ENCODE measurements at regions of chr18 and their contacts with region 1.

Region 1: GRCh38 chr18:46574000-46574742 is 82.8 kb downstream of the LOXHD1 start:
- DNase-seq: no peak
- ATAC-seq: no peak
- H3K4me3 ChIP-seq: no peak overlapping the region
- H3K4me3 Mint-ChIP-seq: no peak overlapping the region
- H3K27ac ChIP-seq: no peak overlapping the region
- H3K27ac Mint-ChIP-seq: no peak overlapping the region
- H3K4me1 ChIP-seq: no peaks in the 10 kb centered on the region
- H3K4me1 Mint-ChIP-seq: no peaks in the 10 kb centered on the region
- H3K27me3 ChIP-seq: peaks cover 0 to 23% of the 10 kb centered on the region in 2 experiments
- H3K27me3 Mint-ChIP-seq: peaks cover 4% of the 10 kb centered on the region in 2 donors

Region 2: DNA sequence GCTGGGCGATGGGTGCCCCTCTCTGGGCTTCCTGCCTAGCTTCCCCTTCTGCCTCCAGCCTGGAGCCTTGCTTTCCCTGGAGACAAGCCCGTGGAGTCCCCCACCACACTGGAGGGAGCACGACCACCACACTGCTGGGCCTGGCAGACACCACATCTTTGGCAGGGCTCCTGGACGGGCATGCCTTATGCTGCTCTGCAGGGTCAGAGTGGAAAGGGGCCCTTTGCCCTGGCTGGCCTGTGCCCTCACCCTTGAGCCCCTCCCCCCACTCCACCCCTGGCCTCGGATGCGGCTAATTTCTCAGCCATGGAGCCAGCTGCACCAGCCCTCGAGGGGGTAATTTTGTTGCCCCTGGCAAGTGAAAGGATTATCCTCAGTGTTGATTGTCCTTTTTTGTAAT is 111.6 kb before region 1 on chr18:
- CTCF ChIA-PET with region 1: no interaction called
- POLR2A ChIA-PET with region 1: no interaction called
- DNase-seq: no peak
- ATAC-seq: no peak
- H3K4me3 ChIP-seq: no peak overlapping the region
- H3K4me3 Mint-ChIP-seq: no peak overlapping the region
- H3K27ac ChIP-seq: no peak overlapping the region
- H3K27ac Mint-ChIP-seq: no peak overlapping the region
- H3K4me1 ChIP-seq: no peaks in the 10 kb centered on the region
- H3K4me1 Mint-ChIP-seq: no peaks in the 10 kb centered on the region
- H3K27me3 ChIP-seq: peaks cover 0 to 26% of the 10 kb centered on the region in 2 experiments
- H3K27me3 Mint-ChIP-seq: peaks cover 3 to 7% of the 10 kb centered on the region in 2 donors

Region 3: DNA sequence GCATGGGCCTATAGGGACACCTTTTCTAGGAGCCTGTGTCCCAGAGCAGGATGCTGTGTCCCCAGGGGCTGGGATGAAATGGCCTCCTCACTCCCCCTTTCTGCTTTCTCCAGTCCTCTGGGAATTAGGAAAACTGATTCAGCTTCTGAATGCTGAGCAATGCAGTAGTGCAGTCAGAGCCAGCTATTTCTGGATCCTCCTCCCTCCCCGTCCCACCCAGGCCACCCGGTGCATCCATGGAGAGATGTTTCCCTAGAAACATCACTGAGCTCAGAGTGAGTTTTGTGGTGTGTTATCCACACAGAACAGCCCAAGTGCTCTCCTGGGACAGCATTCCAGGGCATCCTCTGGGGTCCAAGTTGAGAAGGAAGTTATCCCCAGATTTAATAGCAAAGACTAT is 42.7 kb before region 1 on chr18:
- CTCF ChIA-PET with region 1: interaction called in 1 of 2 experiments, 10 read pairs
- POLR2A ChIA-PET with region 1: no interaction called
- DNase-seq: no peak
- ATAC-seq: no peak
- H3K4me3 ChIP-seq: no peak overlapping the region
- H3K4me3 Mint-ChIP-seq: no peak overlapping the region
- H3K27ac ChIP-seq: no peak overlapping the region
- H3K27ac Mint-ChIP-seq: no peak overlapping the region
- H3K4me1 ChIP-seq: no peaks in the 10 kb centered on the region
- H3K4me1 Mint-ChIP-seq: no peaks in the 10 kb centered on the region
- H3K27me3 ChIP-seq: peaks cover 0 to 4% of the 10 kb centered on the region in 2 experiments
- H3K27me3 Mint-ChIP-seq: peaks cover 6 to 10% of the 10 kb centered on the region in 2 donors